Astrocyte of the cerebellum (primary cell): ENCODE measurements at regions of chr19 and their contacts with region 1.

Region 1: DNA sequence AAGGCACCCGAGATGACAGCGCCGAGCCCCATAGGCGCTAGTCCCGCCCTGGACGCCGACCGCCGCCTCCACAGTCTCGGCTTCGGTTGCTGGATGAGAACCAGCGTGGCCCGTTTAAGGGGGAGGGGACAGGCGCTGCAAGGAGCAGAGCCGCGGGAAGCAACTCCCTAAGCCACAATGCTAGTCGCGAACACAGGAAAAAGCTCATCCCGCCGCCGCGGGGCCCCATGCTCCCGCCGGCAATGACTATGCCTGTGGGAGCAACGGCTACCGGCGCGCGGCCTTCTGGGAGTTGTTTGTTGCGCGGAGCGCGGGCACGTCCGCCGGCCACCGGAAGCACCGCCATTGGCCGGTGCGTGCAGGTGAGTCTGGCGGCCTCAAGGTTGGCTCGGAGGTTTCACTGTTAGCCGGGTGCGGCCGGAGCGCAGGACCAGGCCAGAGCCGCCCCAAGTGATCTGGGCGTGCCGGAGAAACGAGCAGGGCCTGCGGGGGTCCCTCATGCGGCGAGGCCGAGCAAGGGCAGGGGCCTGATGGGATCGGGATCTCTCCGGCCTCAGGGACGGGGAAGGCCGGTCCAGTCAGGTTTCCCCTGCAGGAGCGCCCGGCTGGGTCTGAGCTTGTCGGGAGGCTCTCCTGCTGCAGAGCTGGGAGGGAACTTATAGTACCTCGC is at the start of gene ZNF544:
- DNase-seq: peak; percentile 19
- H3K4me3 ChIP-seq: peak within 1 kb of the TSS; percentile 76
- CTCF ChIP-seq: peak; percentile 27

Region 2: GRCh38 chr19:58261968-58262921 is 33.5 kb after region 1 on chr19:
- in situ Hi-C with region 1: loop called (anchors 5 kb)
- DNase-seq: no peak
- H3K4me3 ChIP-seq: no peak overlapping the region
- CTCF ChIP-seq: no peak

Region 3: GRCh38 chr19:58296104-58296503 is 67.4 kb after region 1 on chr19:
- in situ Hi-C with region 1: loop called (anchors 5 kb)
- DNase-seq: no peak
- H3K4me3 ChIP-seq: no peak overlapping the region
- CTCF ChIP-seq: no peak